Activated T-helper 1 cell treated with anti-CD3 and anti-CD28 coated beads, Interleukin-12 subunit alpha, Interleukin-12 subunit beta, Interleukin-2, Interleukin-4 antibody, amounts not matched to agents 30 ng/mL and 10 ng/mL and 1 ng/mL, durations not matched to agents 14 hours and 24 hours and 36 hours (primary cell): ENCODE measurements at regions of chr12 and their contacts with region 1.

Region 1: GRCh38 chr12:46230983-46231382 is 37.9 kb downstream of the SLC38A1 start:
- DNase-seq: no peak
- H3K4me3 Mint-ChIP-seq: no peak overlapping the region
- H3K27ac Mint-ChIP-seq: peak overlapping the region; percentile 31
- H3K4me1 Mint-ChIP-seq: peaks cover 55% of the 10 kb centered on the region
- H3K27me3 Mint-ChIP-seq: no peaks in the 10 kb centered on the region

Region 2: GRCh38 chr12:46005151-46005797 is 225.7 kb before region 1 on chr12:
- intact Hi-C with region 1: no loop called
- DNase-seq: no peak
- H3K4me3 Mint-ChIP-seq: no peak overlapping the region
- H3K27ac Mint-ChIP-seq: no peak overlapping the region
- H3K4me1 Mint-ChIP-seq: no peaks in the 10 kb centered on the region
- H3K27me3 Mint-ChIP-seq: peaks cover 10% of the 10 kb centered on the region

Region 3: DNA sequence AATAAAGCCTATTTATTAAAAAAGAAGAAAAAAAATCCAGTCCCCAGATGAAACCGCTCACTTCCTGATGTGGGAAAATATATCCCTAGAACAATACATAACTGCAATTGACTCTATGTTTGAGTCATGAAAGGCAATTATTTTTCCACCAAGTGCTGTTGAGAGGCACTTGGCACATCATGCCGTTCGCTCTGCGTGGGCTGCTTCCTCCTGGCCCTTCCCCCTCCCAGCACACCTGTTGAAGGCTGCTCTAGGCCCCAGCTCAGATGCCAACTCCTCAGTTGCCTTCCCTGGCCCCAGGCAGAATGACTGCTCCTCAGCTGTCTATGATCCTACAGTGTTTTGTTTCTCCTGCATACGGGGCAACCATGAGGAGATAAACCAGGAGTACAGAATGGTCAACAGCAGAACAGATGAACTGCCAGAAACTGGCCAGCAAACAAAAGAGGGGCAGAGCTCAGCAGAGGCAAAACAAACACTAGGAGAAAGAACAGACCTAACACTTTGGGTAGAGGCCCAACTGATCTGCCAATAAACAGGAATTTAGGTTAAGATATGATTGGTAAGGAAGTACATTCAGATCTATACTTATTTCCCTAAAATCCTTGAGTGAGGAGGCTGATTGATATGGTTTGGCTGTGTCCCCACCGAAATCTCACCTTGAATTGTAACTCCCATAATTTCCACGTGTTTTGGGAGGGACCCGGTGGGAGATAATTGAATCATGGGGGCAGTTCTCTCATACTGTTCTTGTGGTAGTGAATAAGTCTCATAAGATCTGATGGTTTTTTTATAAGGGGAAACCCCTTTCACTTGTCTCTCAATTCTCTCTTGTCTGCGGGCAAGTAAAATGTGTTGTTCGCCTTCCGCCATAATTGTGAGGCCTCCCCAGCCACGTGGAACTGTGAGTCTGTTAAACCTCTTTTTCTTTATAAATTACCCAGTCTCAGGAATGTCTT is 20.8 kb before region 1 on chr12:
- intact Hi-C with region 1: loop called (anchors 1 kb)
- DNase-seq: peak; percentile 31
- H3K4me3 Mint-ChIP-seq: peak overlapping the region; percentile 52
- H3K27ac Mint-ChIP-seq: peak overlapping the region; percentile 96
- H3K4me1 Mint-ChIP-seq: peaks cover 64% of the 10 kb centered on the region
- H3K27me3 Mint-ChIP-seq: no peaks in the 10 kb centered on the region